ENCODE measurements at regions of chr6 and their contacts with region 1.

Region 1: GRCh38 chr6:97068211-97068610 is 143.7 kb downstream of the KLHL32 start:
- DNase-seq: no peak
- H3K4me3 ChIP-seq: no peak overlapping the region
- H3K27ac ChIP-seq: no peak overlapping the region
- H3K4me1 ChIP-seq: no peaks in the 10 kb centered on the region
- H3K27me3 ChIP-seq: no peaks in the 10 kb centered on the region
- CTCF ChIP-seq: peak; percentile 51

Region 2: DNA sequence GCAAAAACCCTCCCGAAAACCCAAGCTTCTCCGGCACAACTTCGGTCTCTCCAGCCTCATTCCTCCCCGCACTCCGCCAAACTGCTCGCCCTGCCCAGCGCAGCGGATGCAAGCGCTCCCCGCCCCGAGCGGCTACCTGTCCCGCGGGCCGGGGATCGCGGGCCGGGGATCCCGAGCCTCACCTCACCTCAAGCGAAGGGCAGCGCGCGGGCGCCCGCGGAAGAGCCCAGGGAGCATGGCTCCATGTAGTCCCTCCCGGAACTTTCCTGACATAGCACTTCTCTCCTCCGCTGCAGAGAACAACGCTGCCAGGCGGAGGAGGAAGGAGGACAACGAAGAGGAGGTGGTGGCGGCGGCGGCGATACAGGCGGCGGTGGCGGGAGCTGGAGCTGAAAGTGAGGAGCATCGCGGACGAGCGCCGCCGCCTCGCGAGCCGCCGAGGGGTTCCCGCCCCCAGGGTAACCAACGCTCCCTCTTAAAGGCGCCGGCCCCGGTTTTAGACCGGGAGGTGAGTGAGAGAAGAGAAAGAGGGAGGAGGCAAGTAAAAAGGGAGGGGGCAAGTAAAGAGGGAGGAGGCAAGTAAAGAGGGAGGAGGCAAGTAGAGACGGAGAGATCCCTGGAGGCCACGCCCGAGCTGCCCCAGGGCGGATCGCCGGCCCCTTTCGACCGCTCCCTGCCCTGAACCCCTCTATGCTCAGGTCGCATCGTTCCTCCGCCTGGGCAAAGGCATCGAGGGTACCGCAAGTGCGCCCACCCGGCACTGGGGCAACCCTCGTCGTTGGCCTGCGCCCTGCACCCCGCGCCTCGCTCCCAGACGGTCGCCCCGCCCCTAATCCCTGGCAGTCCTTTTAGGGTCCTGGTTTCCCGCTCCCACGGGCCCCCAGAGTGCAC is 230.9 kb before region 1 on chr6 and contains the start of gene GPR63:
- intact Hi-C with region 1: no loop called
- DNase-seq: peak; percentile 40
- H3K4me3 ChIP-seq: peak within 1 kb of the TSS; percentile 85
- H3K27ac ChIP-seq: peak within 1 kb of the TSS; percentile 22
- H3K4me1 ChIP-seq: peaks cover 19% of the 10 kb centered on the region
- H3K27me3 ChIP-seq: peaks cover 7% of the 10 kb centered on the region
- CTCF ChIP-seq: no peak
- total RNA-seq, gene GPR63: 1.0 TPM

Region 3: DNA sequence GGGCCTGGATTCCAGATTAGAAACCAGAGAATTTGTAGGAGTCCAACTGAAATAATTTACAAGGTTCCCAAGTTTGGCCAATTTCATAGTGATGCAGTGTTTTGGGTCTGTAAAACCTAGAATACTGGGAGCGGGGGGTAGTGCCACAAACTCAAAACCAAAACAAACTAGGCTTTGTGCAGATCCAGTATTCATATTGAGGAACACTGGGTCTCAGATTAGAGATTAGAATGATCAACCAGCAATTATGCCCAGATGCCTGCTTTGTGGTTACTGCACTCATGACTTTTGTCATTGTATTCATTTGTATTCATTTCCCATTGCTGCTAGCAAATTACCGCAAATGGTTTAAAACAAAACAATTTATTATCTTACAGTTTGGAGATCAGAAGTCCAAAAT is 167.3 kb before region 1 on chr6:
- intact Hi-C with region 1: loop called (anchors 5 kb)
- DNase-seq: no peak
- H3K4me3 ChIP-seq: no peak overlapping the region
- H3K27ac ChIP-seq: no peak overlapping the region
- H3K4me1 ChIP-seq: peaks cover 33% of the 10 kb centered on the region
- H3K27me3 ChIP-seq: no peaks in the 10 kb centered on the region
- CTCF ChIP-seq: no peak

Region 4: GRCh38 chr6:97394160-97394748 is 326.0 kb after region 1 on chr6:
- intact Hi-C with region 1: loop called (anchors 10 kb)
- DNase-seq: no peak
- H3K4me3 ChIP-seq: no peak overlapping the region
- H3K27ac ChIP-seq: no peak overlapping the region
- H3K4me1 ChIP-seq: no peaks in the 10 kb centered on the region
- H3K27me3 ChIP-seq: no peaks in the 10 kb centered on the region
- CTCF ChIP-seq: peak; percentile 96

Measured in left ventricle myocardium inferior (tissue), 1 donor.